Right ventricle myocardium inferior (tissue), 1 donor: ENCODE measurements at regions of chr12 and their contacts with region 1.

Region 1: GRCh38 chr12:54419088-54419892 is at the start of gene ITGA5:
- DNase-seq: peak; percentile 89
- ATAC-seq: peak; percentile 66
- total RNA-seq, gene ITGA5: 53.5 TPM

Region 2: GRCh38 chr12:54379401-54380201 is 39.7 kb before region 1 on chr12:
- intact Hi-C with region 1: no loop called
- DNase-seq: peak; percentile 95
- ATAC-seq: peak; percentile 83

Region 3: GRCh38 chr12:54431911-54432814 is 12.9 kb after region 1 on chr12:
- intact Hi-C with region 1: loop called (anchors 2 kb)
- DNase-seq: no peak
- ATAC-seq: peak; percentile 68